A673 (cell line): ENCODE measurements at regions of chr7 and their contacts with region 1.

Region 1: DNA sequence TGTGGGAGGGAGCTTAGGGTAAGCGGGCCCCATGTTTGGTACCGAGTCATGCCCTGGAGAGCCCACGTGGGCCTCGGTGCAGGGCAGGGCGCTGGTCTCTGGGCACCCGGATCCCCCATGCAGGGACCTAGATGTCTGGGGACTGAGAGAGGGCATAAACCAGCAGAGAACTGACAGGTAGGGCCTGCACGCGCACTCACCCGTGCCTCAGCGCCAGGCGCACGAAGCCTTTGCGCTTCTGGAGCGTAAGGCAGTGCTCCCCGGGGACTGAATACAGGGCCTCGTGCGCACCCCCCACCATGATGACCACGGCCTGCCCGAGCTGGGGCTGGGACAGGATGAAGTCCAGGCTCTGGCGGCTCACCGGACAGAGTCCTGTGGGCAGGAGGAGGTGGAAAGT is 2.8 kb downstream of the MOGAT3 start:
- DNase-seq: no peak
- H3K4me3 ChIP-seq: no peak overlapping the region
- H3K27ac ChIP-seq: no peak overlapping the region
- H3K4me1 ChIP-seq: no peaks in the 10 kb centered on the region
- H3K27me3 ChIP-seq: no peaks in the 10 kb centered on the region
- CTCF ChIP-seq: no peak

Region 2: DNA sequence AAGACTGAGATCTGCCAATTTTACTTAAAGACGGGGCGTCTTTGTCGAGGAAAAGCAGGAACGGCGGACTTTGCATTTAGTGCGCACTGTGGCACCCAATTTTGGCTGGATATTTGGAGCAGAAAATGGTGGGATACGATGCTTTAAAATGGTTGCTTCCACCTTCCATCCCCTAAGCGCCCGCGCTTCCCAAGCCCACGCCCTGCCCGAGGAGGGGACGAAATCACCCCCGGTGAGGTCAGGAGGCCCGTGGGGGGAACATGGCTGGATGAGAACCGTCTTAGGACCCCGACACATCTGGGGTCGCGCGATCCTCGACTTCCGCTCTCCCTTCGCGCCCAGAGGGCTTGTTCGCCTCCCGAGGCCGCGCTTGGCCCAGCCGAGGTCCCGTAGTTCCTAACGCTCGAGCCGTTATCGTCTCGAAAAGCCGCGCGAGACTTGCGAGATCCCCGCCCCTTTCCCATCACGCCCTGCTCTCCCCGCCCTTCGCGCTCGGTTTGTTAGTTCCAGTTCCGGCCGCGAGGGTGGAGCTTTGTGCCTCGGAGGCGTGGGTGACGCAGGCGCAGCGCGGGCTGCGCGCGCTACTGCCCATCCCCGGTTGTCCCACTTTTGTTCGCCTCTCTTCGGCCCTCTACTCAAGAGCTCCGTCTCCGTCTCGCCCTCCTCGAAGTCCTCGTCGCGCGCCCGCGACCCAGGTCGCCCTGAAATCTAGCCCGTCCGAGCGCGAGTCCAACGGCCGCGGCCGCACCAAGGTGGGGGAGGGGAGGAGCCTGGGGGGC is 323.2 kb before region 1 on chr7 and contains the start of gene SRRT:
- CTCF ChIA-PET with region 1: interaction called, 10 read pairs
- POLR2A ChIA-PET with region 1: no interaction called
- intact Hi-C with region 1: no loop called
- DNase-seq: peak; percentile 100
- H3K4me3 ChIP-seq: peak within 1 kb of the TSS; percentile 99
- H3K27ac ChIP-seq: peak within 1 kb of the TSS; percentile 98
- H3K4me1 ChIP-seq: peaks cover 20% of the 10 kb centered on the region
- H3K27me3 ChIP-seq: no peaks in the 10 kb centered on the region
- CTCF ChIP-seq: 0 out of 2 replicates have a peak, but pooled peaks have one; percentile 20
- total RNA-seq, gene SRRT: 257 and 277 TPM in 2 replicates